ENCODE measurements at regions of chr18 and their contacts with region 1.

Region 1: GRCh38 chr18:49858309-49859020 is 45.1 kb upstream of the ACAA2 start:
- H3K4me3 Mint-ChIP-seq: no peak overlapping the region
- H3K27ac Mint-ChIP-seq: no peak overlapping the region
- H3K4me1 Mint-ChIP-seq: no peaks in the 10 kb centered on the region
- H3K27me3 Mint-ChIP-seq: no peaks in the 10 kb centered on the region

Region 2: DNA sequence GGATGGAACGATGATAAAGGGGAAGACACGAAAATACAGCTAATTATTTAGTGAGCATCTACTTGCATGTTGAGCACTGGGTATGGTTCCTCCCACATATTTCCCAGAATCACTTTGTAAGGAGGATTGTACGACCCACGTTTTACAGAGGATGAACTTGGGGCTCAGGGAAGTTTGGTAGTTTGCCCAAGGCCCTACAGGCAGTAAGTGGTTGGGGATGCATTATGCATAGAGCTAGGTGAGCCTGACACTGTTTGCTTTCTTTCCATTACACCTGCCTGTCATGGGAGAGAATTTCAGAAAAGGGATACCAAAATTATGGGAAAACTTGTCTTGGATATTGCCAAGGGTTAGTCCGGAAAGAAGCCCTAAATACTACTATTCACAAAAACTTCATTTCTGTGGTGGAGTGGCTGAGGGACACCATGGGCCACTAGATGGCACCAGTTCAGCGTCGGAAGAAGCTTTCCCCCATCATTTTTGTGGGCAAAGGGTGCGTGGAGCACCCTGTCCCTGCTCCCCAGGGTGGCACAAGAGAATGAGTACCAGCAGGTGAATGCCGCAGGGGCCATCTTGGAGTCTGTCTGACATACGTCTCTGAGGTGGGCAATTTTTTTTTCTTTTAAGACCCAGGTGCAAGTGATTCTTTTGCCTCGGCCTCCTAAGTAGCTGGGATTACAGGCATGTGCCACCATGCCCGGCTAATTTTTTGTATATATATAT is 347.9 kb before region 1 on chr18:
- intact Hi-C with region 1: loop called (anchors 1 kb)
- H3K4me3 Mint-ChIP-seq: no peak overlapping the region
- H3K27ac Mint-ChIP-seq: no peak overlapping the region
- H3K4me1 Mint-ChIP-seq: no peaks in the 10 kb centered on the region
- H3K27me3 Mint-ChIP-seq: peaks cover 17% of the 10 kb centered on the region

Region 3: DNA sequence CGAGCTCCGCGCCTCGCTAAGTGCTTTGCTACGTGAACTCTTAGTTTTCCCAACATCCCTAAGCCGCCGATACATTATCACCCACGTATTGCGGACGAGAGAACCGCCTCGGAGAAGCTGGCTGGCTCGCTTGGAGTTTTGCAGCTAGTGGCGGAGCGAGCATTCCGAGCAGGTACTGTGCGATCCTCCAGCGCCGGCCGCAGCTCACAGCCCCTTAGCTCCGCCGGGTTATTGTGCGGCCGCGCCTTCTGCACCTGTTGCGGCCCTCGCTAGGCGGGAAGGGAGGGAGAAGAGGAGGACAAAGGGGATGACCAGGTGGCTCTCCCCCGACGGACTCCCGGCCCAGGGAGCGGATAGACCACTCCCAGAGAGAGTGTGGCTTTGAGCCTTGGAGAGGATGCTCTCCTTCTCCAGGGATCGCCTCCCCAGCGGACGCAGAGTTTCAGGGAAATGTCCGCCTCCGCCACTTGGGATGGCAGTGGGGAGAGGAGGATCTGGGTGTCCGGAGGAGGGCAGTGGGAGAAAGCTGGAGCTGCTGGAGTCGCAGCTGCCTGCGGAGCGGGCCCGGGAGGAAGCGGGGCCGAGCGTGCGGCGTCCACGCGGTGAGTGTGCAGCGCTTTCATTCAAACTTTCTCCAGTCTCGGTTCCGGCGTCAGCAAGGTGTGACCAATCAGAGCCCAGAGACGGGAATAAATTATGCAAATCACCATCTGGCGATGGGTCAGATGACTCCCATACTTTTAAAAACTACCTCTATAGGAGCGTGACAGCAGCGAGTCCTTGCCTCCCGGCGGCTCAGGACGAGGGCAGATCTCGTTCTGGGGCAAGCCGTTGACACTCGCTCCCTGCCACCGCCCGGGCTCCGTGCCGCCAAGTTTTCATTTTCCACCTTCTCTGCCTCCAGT is 296.9 kb before region 1 on chr18 and contains the start of gene LIPG:
- intact Hi-C with region 1: loop called (anchors 2 kb)
- H3K4me3 Mint-ChIP-seq: peak within 1 kb of the TSS; percentile 50
- H3K27ac Mint-ChIP-seq: no peak within 1 kb of the TSS
- H3K4me1 Mint-ChIP-seq: peaks cover 14% of the 10 kb centered on the region
- H3K27me3 Mint-ChIP-seq: peaks cover 73% of the 10 kb centered on the region

Region 4: DNA sequence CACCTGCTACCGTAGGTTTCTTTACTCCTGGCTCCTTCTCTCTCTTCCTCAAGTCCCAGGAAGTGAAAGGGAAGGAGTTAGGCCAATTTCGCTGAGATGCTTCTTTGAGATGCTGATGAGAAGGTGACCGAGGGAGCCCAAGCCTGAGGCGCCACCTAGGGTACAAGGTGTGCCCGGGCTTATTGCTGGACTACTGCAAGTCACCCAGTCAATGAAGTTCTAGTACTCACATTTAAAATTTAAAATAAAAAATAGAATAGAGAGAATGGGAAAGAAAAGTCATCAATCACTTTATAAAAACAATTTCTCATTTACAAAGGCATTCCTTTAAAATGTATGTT is 90.4 kb before region 1 on chr18:
- intact Hi-C with region 1: no loop called
- H3K4me3 Mint-ChIP-seq: no peak overlapping the region
- H3K27ac Mint-ChIP-seq: no peak overlapping the region
- H3K4me1 Mint-ChIP-seq: no peaks in the 10 kb centered on the region
- H3K27me3 Mint-ChIP-seq: no peaks in the 10 kb centered on the region